ENCODE measurements at regions of chr9 and their contacts with region 1.

Region 1: DNA sequence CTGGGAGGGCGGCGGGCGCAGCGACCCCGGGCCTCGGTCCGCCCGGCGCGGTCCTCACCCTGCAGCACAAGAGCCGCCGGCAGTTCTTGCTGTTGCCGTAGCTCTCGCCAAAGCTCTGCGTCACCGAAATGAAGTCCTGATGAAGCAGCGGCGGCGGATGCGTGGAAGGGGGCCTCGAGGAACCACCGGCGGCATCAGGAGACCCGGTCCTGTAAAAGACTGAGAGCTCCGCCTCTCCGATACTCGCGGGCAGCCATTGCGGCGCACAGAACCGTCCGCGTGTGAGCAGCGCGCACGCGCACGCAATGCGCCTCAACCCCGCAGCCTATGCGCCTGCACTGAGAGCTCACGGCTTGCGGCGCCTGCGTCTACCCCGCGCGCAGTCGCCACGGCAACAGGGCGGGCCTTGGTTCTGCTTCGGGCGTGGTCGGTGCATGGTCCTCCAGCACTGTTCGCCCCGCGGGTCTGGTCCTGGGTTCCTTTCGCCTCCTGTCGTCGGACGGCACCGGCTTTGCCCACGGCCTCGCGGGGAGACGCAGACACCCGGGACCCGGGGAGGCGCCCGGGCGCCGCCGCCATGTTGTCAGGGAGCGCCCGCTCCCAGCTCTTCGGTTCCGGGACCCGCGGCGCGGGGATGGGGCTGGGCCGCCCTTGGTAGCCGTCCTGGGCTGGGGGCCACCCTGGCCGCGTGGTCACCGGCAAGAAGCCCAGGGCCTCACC is 9.3 kb upstream of the GRIN1 start:
- DNase-seq: peak; percentile 93
- ATAC-seq: peak; percentile 99 to 100

Region 2: GRCh38 chr9:137188490-137189296 is 59.1 kb after region 1 on chr9 and contains the starts of genes ANAPC2 and SSNA1:
- intact Hi-C with region 1: loop called in 1 of 2 experiments (anchors 10 kb)
- DNase-seq: peak; percentile 93
- ATAC-seq: peak; percentile 92 to 93
- total RNA-seq, gene ANAPC2: 31.2 to 32.5 TPM
- total RNA-seq, gene SSNA1: 53.1 to 55.1 TPM

Measured in left cardiac atrium (tissue), 4 donors.